ENCODE measurements at regions of chr15 and their contacts with region 1.

Region 1: GRCh38 chr15:89367485-89368451 is 33.1 kb upstream of the POLG start:
- DNase-seq: peak; percentile 76
- H3K4me3 ChIP-seq: peak overlapping the region; percentile 16 to 21
- H3K27ac ChIP-seq: no peak overlapping the region
- H3K4me1 ChIP-seq: peaks cover 4% of the 10 kb centered on the region
- H3K27me3 ChIP-seq: peaks cover 6% of the 10 kb centered on the region
- CTCF ChIP-seq: no peak
- POLR2A ChIP-seq: no peak

Region 2: DNA sequence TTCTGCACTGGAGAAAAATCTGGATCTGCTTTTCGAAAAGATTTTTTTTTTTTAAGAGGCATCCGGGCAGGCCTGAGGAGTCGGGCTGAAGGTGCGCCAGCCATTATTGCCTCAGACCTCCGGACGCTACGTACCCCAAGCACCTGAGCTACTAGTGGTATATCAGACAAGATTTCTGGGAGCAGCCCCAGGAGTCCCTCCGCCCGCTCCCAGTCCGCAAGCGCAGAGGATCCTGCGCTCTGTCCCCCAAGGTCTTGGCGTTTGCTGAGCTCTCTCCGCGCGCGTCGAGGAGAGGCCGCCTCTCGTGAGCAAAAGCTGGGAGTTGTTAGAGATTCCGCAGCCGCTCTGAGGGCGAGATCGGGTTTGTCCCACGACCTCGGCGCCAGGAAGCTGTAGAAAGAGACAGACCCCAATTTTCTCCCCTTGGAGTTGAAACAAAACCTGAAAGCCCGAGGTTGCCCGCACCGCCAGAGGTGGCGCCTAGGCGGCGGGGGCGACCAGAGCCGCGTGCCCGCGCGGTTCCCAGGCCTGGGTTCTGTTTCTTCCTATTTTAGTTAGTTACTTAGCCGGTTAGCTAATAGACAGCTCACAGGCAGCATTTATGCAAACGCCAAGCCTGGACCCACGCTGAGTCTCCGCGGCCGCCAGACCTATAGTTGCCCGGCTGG is 39.3 kb after region 1 on chr15:
- intact Hi-C with region 1: no loop called
- DNase-seq: no peak
- H3K4me3 ChIP-seq: no peak overlapping the region
- H3K27ac ChIP-seq: no peak overlapping the region
- H3K4me1 ChIP-seq: peaks cover 32% of the 10 kb centered on the region
- H3K27me3 ChIP-seq: no peaks in the 10 kb centered on the region
- CTCF ChIP-seq: no peak
- POLR2A ChIP-seq: no peak

Region 3: DNA sequence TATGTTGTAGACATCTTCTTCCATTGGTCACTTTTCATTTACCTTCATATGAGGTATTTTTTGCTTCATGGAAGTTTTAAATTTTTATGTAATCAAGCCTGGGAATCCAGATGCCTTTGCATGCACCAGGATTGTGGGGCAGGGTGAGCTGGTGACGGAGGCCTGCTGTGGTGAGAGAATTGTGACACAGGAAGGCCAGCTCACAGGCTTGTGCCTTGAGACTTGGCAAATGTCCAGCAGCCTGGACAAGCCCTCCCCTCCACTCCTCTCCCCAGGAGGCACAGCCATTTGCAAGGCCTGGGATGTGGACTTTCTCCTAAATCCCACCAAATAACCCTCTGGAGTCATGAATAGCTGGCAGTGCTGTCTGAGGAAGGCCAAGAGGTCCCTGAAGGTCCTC is 61.3 kb after region 1 on chr15:
- intact Hi-C with region 1: loop called (anchors 5 kb)
- DNase-seq: no peak
- H3K4me3 ChIP-seq: no peak overlapping the region
- H3K27ac ChIP-seq: no peak overlapping the region
- H3K4me1 ChIP-seq: no peaks in the 10 kb centered on the region
- H3K27me3 ChIP-seq: no peaks in the 10 kb centered on the region
- CTCF ChIP-seq: no peak
- POLR2A ChIP-seq: no peak

Measured in testis (tissue), 5 donors.